PC-9 (cell line): ENCODE measurements at regions of chr16 and their contacts with region 1.

Region 1: DNA sequence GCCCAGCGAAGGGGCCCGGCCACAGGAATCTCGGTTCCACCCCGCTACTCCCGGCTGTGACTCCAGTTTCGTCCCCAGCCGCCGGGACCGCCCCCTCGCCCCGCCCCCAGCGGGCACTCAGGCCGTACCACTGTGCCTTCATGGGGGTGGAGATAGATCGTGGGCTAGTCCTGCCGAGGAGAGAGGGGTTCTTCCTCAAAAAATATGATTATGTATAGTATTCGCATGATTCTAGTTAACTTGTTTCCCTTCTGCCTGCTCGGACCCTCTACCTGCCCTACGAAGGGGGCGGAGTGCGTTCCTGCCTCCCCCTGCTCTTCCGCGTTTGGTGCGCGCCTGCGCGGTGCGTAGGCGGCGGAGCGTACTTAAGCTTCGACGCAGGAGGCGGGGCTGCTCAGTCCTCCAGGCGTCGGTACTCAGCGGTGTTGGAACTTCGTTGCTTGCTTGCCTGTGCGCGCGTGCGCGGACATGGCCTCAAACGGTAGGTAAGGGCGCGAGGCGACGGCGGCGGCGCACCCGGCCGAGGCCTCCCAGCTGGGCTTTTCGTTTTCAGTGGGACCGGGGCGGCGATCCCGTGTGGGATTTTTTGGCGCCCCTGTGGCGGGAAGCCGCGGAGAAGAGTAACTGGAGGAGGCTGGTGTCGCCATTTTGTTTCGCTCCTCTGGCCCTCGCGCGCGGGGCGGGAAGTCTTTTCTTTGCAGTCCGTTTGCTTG is at the start of gene FUS:
- DNase-seq: peak; percentile 80 to 93
- H3K4me3 ChIP-seq: peak within 1 kb of the TSS; percentile 83
- H3K27ac ChIP-seq: peak within 1 kb of the TSS; percentile 94
- H3K4me1 ChIP-seq: peaks cover 22% of the 10 kb centered on the region
- H3K27me3 ChIP-seq: no peaks in the 10 kb centered on the region
- CTCF ChIP-seq: no peak
- total RNA-seq, gene FUS: 429 and 637 TPM in 2 replicates

Region 2: GRCh38 chr16:30997000-30997886 is 182.7 kb before region 1 on chr16:
- CTCF ChIA-PET with region 1: interaction called, 21 read pairs
- POLR2A ChIA-PET with region 1: no interaction called
- intact Hi-C with region 1: loop called (anchors 1 kb)
- DNase-seq: peak; percentile 50 to 84
- H3K4me3 ChIP-seq: peak overlapping the region; percentile 67
- H3K27ac ChIP-seq: peak overlapping the region; percentile 80
- H3K4me1 ChIP-seq: peaks cover 24% of the 10 kb centered on the region
- H3K27me3 ChIP-seq: no peaks in the 10 kb centered on the region
- CTCF ChIP-seq: no peak

Region 3: DNA sequence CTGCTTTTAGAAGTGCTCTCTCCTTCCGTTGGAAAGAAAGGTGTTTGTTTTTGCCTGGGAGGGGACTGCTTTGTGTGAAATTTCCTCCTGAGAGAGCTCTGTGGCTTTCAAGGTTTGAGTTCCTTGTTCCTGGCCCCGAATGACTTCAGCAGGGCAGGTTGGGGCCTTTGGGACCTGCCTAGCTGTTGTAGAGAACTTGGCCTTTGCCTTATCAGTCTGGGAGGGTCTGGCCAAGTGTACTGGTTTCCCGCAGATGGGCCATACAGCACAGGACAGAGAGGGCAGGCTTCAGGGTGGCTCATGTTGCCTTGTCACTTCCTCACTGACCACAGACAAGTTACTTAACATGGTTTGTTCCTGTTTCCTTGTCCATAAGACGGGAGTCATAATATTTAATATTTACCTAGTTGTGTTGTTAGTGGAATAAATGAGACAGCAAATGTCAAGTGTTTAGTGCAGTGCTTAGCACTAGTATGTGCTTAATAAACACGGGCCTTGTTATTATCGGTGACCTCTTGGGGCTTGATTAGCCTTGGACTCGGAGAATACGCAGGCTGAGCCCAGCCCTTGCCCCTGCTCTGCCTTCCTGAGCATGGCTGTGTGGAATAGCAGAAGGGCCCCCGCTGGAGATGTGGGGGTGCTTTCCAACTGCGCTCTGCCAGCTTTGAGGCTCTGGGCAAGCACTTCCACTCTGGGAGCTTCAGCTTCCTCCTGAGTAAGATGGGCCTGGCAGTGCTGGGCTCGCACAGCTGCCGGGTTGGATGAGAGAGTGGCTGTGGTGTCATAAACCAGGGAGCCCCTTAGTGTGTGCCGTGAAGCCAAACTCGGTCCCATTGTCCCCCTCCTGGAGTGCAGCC is 51.0 kb before region 1 on chr16:
- CTCF ChIA-PET with region 1: no interaction called
- POLR2A ChIA-PET with region 1: interaction called, 10 read pairs
- intact Hi-C with region 1: no loop called
- DNase-seq: peak; percentile 69 to 94
- H3K4me3 ChIP-seq: no peak overlapping the region
- H3K27ac ChIP-seq: peak overlapping the region; percentile 91
- H3K4me1 ChIP-seq: peaks cover 56% of the 10 kb centered on the region
- H3K27me3 ChIP-seq: no peaks in the 10 kb centered on the region
- CTCF ChIP-seq: no peak

Region 4: GRCh38 chr16:31168848-31169247 is 11.1 kb before region 1 on chr16:
- CTCF ChIA-PET with region 1: no interaction called
- POLR2A ChIA-PET with region 1: interaction called, 12 read pairs
- intact Hi-C with region 1: no loop called
- DNase-seq: peak; percentile 61 to 87
- H3K4me3 ChIP-seq: no peak overlapping the region
- H3K27ac ChIP-seq: no peak overlapping the region
- H3K4me1 ChIP-seq: peaks cover 25% of the 10 kb centered on the region
- H3K27me3 ChIP-seq: no peaks in the 10 kb centered on the region
- CTCF ChIP-seq: no peak

Region 5: DNA sequence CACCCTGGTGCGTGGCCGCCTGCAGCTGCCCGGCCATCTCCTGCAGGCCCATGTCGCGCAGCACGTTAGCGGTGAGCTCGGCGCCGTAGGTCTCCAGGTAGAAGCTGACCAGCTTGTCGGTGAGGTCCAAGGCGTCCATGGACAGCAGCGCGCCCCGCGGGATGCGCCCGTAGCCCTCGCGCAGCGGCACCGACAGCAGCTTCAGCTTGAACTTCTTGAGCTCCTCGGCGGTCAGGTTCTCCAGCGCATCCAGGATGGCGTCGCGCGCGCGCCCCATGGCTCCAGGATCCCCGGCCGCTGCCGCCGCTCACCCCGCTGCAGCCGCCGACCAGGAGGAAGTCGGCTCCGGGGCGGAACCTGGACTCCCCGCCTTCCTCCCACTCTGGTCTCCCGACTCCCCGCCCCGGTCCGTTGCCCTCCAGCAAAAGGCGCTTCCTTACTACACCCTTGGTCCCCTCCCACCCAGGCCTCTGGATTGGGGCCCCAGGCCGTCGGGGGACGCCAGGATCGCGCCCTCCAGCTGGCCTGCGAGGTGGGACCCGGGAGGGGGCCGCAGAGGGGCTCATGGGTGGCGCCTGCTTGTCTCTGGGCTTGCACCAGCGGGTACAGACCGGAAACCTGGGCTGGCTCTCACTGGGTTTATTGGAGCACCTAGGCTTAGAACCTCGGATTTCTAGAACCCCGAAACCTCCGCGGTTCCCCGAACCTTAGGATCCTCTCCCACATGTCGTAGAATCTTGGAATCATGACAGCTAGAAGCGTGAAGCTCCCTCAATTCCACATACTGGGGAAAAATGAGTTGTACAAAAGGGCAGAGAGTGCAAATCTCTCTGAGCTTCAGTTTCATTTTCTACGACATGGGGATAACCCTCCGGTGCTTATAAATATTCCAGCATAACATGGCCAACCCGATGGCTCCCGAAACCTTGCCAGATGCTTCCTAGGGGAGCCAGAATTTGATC is 22.8 kb after region 1 on chr16 and contains the start of gene PYCARD:
- CTCF ChIA-PET with region 1: no interaction called
- POLR2A ChIA-PET with region 1: interaction called, 11 read pairs
- intact Hi-C with region 1: no loop called
- DNase-seq: peak in 1 of 2 experiments; percentile 65
- H3K4me3 ChIP-seq: peak within 1 kb of the TSS; percentile 47
- H3K27ac ChIP-seq: no peak within 1 kb of the TSS
- H3K4me1 ChIP-seq: peaks cover 19% of the 10 kb centered on the region
- H3K27me3 ChIP-seq: no peaks in the 10 kb centered on the region
- CTCF ChIP-seq: no peak
- total RNA-seq, gene PYCARD: 72.9 and 107 TPM in 2 replicates